AG04449 (cell line): ENCODE measurements at regions of chr2 and their contacts with region 1.

Region 1: GRCh38 chr2:216792222-216793021 is 67.4 kb downstream of the TNP1 start:
- DNase-seq: no peak
- H3K4me3 ChIP-seq: no peak overlapping the region
- CTCF ChIP-seq: peak; percentile 2

Region 2: DNA sequence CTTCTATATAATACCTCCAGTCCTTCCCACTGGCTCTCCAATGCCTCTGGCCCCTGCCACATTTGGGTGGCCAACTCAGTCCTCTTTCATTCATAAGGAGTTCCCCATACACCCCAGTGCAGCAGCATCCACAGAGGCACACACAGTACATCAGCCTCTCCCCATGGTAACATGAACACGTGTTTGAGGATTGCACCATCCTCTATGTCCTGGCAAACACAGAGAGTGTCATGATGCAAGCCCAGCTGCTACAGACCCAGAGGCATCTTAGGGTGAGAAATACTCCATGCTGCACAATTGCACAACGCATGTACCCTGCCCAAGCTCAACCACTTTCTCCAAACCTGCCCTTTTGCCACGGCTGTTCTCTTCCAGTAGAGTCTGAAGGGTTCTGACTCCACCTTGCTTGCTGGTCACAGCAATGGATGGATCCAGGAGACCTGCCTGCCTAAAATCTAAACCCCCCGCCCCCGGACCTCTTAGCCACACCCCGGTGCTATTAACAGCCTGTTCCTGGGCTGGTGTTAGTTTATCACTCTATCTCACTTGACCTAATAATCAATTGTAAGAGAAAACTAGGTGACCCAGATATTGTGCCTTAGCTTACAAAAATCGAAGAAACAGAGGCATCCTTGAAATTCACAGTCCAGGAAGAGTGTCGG is 108.4 kb before region 1 on chr2:
- CTCF ChIA-PET with region 1: no interaction called
- POLR2A ChIA-PET with region 1: no interaction called
- DNase-seq: peak; percentile 89
- H3K4me3 ChIP-seq: no peak overlapping the region
- CTCF ChIP-seq: no peak

Region 3: GRCh38 chr2:216761133-216761532 is 31.3 kb before region 1 on chr2:
- CTCF ChIA-PET with region 1: no interaction called
- POLR2A ChIA-PET with region 1: no interaction called
- DNase-seq: no peak
- H3K4me3 ChIP-seq: no peak overlapping the region
- CTCF ChIP-seq: no peak

Region 4: DNA sequence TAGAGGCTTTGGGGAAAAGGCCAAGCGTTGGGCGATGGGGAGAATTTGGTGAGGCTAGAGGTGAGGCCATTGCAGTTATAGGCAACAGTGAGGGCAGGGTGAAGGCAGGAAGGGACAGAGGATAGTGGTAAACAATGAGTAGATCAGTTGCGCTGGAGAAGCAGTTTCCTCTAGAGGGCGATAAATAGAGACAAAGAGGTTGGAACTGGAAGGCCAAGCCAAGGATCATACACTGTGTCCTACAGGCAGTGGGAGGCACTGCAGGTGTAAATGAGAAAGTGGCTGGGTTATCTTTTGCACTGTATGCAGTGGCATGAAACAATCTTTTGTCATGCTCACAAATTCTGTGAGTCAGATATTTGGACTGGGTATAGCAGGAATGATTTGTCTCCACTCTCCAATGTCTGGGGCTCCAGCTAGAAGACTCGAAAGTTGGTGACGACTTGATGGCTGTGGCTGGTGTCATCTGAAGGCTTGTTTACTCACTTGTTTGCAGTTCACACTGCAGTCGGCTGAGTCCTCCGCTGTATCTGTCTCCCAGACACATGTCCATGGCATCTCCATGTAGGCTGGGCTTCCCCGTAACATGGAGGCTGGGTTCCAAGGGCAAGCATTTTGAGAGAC is 14.7 kb before region 1 on chr2:
- CTCF ChIA-PET with region 1: interaction called, 14 read pairs
- POLR2A ChIA-PET with region 1: interaction called, 11 read pairs
- DNase-seq: no peak
- H3K4me3 ChIP-seq: no peak overlapping the region
- CTCF ChIP-seq: peak; percentile 56

Region 5: DNA sequence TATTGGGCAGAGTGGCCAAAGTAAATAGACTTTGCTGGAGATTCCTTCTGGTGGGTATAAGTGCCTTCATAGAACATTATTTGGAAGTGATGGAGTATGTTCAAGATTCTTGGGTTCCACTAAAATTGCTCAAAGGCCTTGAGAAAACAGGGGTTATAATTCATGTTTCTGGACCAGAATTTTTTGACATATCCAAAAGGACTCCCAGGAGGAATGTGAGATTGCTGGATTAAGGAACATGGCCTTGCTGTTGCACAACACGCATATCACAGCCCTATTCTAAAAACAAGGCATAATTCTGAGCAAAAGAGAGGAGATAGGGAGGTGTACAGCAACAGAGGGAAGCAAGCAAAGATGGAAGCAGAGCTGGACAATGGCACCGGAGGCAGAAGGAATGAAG is 179.2 kb after region 1 on chr2:
- CTCF ChIA-PET with region 1: no interaction called
- POLR2A ChIA-PET with region 1: no interaction called
- DNase-seq: no peak
- H3K4me3 ChIP-seq: no peak overlapping the region
- CTCF ChIP-seq: no peak